CD8-positive, alpha-beta T cell (primary cell): ENCODE measurements at regions of chrX and their contacts with region 1.

Region 1: DNA sequence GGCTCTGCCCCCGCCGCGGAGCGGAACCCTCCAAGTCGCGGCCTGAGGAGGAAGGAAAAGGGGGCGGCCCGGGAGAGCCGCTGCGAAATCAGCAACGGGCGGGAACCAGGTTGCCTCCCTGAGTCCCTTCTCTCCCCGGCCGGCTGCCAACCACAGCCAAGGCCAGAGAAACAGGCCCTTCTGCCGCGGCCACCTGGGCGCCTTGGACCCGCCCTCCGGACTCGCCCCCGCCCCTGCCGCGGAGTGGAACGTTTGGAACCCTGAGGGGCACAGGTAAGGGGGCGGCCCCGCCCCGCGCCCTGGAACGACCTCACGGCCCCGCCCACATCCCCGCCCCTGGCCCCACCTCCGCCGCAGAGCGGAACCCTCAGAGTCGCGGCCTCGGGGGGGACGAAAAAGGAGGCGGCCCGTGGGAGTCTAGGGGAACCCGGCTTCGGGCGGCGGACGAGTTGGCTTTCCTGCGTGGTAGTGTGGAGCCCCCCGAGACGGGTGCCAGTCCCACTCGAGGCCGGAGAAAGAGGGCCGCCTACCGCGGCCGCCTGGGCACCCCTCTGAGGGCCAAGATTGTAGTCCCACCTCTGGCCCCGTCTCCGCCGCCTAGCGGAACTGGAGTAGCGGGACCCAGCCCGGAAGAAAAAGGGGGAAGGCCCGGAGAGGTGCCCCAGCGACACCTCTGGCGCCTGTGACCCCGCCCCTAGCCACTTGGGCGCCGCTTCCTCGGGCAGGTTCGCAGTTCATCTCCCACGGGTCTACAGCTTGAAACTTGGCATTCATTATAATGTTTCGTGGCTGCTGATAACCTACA is 669 bp upstream of the PHKA2 start:
- DNase-seq: peak; percentile 78 to 90 (median 82)
- ATAC-seq: peak; percentile 88
- H3K4me3 ChIP-seq: peak overlapping the region; percentile 75 to 79
- H3K4me3 Mint-ChIP-seq: peak overlapping the region; percentile 83
- H3K27ac ChIP-seq: peak overlapping the region; percentile 82 to 95
- H3K27ac Mint-ChIP-seq: peak overlapping the region; percentile 94
- H3K4me1 ChIP-seq: peaks cover 15% of the 10 kb centered on the region
- H3K4me1 Mint-ChIP-seq: peaks cover 27% of the 10 kb centered on the region
- H3K27me3 ChIP-seq: no peaks in the 10 kb centered on the region
- H3K27me3 Mint-ChIP-seq: no peaks in the 10 kb centered on the region
- CTCF ChIP-seq: peak; percentile 27

Region 2: DNA sequence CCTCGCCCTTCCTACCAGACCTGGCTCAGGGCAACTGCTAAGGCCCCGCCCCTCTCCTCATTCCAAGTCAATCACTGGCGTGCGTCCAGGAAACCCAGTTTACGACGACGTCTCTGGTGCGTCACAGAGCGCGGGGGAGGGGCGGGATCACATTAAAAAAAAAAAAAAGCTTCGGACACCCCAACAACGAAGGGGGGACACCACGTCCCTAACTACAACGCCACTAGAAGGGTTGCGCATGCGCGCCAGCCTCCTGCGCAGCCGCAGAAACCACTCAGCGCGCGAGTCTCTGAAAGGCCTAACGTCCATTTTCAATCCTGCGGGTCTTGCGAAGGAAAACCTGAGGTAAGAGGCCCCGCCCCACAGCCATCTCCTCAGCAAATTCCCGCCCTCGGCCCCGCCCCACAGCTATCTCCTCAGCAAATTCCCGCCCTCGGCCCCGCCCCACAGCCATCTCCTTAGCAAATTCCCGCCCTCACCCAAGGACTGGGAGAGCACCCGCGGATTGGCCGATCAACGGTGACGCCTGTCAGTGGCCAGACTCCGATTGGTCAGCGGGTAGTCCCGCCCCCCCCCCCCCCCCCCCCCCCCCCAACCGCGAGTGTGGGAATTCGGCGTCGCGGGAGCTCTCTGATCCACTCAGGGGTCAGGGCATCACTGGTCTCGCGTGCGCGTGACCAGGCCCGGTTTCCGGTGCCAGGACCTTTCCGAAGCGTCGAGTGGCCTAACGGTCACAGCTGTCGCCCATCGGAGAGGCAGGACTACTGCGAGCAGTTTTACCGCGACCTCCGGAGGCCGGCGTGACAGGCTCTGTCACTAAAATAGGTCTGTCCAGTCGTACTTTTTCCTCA is 1247.5 kb before region 1 on chrX and contains the start of gene SCML1:
- CTCF ChIA-PET with region 1: no interaction called
- POLR2A ChIA-PET with region 1: no interaction called
- intact Hi-C with region 1: loop called (anchors 5 kb)
- DNase-seq: peak; percentile 64 to 90 (median 86)
- ATAC-seq: peak; percentile 62
- H3K4me3 ChIP-seq: peak within 1 kb of the TSS; percentile 51 to 92
- H3K4me3 Mint-ChIP-seq: peak within 1 kb of the TSS; percentile 87
- H3K27ac ChIP-seq: peak within 1 kb of the TSS; percentile 88 to 95
- H3K27ac Mint-ChIP-seq: peak within 1 kb of the TSS; percentile 91
- H3K4me1 ChIP-seq: peaks cover 9% of the 10 kb centered on the region
- H3K4me1 Mint-ChIP-seq: peaks cover 35% of the 10 kb centered on the region
- H3K27me3 ChIP-seq: no peaks in the 10 kb centered on the region
- H3K27me3 Mint-ChIP-seq: no peaks in the 10 kb centered on the region
- CTCF ChIP-seq: no peak
- total RNA-seq, gene SCML1: 50.6 to 52.2 TPM

Region 3: DNA sequence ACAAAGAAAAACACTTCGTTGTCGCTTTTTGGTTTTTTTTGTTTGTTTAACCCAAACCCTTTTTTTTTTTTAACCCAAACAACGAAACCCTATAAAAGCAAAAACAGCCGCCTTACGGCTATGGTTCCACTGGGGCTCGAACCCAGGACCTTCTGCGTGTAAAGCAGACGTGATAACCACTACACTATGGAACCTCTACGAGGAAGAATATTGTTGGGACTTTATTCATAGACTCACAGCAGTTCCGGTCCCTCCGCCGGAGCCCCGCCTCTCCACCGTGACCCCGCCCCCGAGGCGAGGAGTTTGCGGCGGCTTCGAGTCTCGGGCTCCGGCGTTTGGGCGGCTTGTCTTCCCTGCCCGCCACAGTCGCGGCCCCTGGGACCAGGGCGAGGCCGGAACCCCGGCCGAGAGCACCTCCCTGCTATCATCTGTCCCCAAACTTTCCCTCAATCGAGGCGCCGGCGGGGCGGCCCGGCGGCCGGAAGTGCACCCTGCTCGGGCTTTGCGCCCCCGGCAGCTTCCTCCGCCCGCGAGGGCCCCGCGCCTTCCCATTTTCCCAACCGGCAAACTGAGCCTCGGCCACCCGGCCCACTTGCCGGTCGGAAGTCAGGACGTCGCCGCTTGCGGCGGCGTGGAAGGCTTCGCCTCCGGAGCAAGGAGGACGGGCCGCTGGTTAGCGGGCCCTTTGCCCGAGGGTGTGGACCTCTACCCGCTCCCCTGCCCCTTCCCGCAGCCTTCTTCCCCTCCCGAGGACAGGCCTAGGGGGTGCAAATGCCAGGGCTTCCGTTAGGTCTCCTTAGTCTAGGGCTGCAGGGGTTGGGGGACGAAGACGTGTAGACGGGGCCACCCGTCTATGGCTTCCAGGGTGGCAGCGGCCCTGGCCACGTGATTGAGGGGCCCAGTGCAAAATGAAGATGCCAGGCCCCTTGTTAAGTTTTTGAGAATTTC is 309.5 kb before region 1 on chrX:
- CTCF ChIA-PET with region 1: no interaction called
- POLR2A ChIA-PET with region 1: no interaction called
- intact Hi-C with region 1: loop called in 1 of 2 experiments (anchors 2 kb)
- DNase-seq: peak; percentile 66 to 88 (median 73)
- ATAC-seq: peak; percentile 90
- H3K4me3 ChIP-seq: peak overlapping the region; percentile 70 to 76
- H3K4me3 Mint-ChIP-seq: peak overlapping the region; percentile 81
- H3K27ac ChIP-seq: peak overlapping the region; percentile 76 to 84
- H3K27ac Mint-ChIP-seq: peak overlapping the region; percentile 89
- H3K4me1 ChIP-seq: no peaks in the 10 kb centered on the region
- H3K4me1 Mint-ChIP-seq: peaks cover 11% of the 10 kb centered on the region
- H3K27me3 ChIP-seq: no peaks in the 10 kb centered on the region
- H3K27me3 Mint-ChIP-seq: no peaks in the 10 kb centered on the region
- CTCF ChIP-seq: no peak

Region 4: DNA sequence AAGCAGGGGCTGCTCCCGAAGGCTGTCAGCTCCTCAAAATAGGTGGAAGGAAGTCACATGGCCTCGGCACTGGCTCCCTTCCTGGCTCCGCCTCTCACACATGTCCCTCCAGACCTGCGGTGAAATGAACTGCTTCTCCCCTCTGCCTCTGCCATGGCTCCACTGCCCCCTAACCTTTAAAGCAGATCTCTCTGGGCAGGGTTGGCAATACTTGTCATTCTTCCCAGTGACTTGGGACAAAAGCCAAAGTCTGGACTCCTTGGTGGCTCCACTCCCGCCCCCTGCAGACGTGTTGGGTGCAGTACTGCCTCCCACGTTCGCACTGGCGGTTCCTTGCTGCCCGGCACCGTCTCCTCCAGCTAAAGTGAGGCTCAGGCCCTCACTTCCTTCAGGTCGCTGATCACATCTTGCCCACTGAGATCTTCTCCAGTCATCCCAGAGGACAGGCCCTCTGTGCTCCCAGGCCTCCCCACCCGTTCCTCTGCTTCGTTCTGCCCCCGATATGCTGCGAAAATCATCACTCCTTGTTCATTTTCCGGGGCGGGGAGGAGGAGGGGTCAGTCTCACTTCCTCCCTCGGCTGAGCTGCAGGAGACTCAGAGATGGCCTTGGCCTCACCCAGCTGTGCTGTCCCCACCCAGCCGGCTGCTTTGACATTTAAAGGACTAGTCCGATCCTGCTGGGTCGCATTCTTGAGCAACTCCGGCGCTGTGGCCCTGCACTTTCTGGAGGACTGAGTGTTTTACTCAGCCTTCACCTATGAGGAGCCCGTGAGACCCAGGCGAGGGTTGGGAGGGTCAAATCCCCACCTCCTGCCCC is 98.0 kb before region 1 on chrX:
- CTCF ChIA-PET with region 1: no interaction called
- POLR2A ChIA-PET with region 1: no interaction called
- intact Hi-C with region 1: loop called (anchors 5 kb)
- DNase-seq: peak; percentile 2 to 67 (median 31)
- ATAC-seq: peak; percentile 47
- H3K4me3 ChIP-seq: peak overlapping the region; percentile 58 to 64
- H3K4me3 Mint-ChIP-seq: peak overlapping the region; percentile 88
- H3K27ac ChIP-seq: peak overlapping the region; percentile 14 to 69
- H3K27ac Mint-ChIP-seq: peak overlapping the region; percentile 91
- H3K4me1 ChIP-seq: peaks cover 27% of the 10 kb centered on the region
- H3K4me1 Mint-ChIP-seq: peaks cover 33% of the 10 kb centered on the region
- H3K27me3 ChIP-seq: no peaks in the 10 kb centered on the region
- H3K27me3 Mint-ChIP-seq: no peaks in the 10 kb centered on the region
- CTCF ChIP-seq: peak; percentile 33

Region 5: DNA sequence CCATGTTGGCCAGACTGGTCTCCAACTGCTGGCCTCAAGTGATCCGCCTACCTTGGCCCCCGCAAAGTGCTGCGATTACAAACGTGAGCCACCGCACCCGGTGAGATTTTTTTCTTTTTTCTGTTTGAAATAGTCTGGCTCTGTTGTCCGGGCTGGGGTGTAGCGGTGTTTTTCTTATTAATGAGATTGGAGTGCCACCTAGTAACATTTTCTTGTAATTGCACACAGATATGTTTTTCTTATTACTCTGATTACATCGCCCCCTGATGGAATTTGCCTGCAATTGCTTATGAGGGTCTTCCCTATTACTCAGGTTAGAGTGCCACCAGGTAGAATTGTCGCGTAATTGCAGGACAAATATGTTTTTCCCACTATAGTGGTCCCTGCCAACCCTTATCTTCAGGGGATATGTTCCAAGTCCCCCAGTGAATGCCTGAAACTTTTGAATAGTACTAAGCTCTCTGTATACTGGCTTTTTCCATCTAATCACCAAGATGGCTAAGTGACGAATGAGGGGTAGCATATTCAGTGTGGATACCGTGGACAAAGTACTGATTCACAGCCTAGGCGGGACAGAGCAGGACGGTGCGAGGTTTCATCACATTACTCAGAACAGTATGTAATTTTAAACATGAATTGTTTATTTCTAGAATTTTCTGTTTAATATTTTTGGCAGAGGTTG is 350.5 kb after region 1 on chrX:
- CTCF ChIA-PET with region 1: no interaction called
- POLR2A ChIA-PET with region 1: no interaction called
- intact Hi-C with region 1: loop called (anchors 2 to 5 kb)
- DNase-seq: peak in 3 of 9 experiments; percentile 21 to 53 (median 39)
- ATAC-seq: peak; percentile 21
- H3K4me3 ChIP-seq: no peak overlapping the region
- H3K4me3 Mint-ChIP-seq: no peak overlapping the region
- H3K27ac ChIP-seq: no peak overlapping the region
- H3K27ac Mint-ChIP-seq: no peak overlapping the region
- H3K4me1 ChIP-seq: no peaks in the 10 kb centered on the region
- H3K4me1 Mint-ChIP-seq: no peaks in the 10 kb centered on the region
- H3K27me3 ChIP-seq: no peaks in the 10 kb centered on the region
- H3K27me3 Mint-ChIP-seq: no peaks in the 10 kb centered on the region
- CTCF ChIP-seq: no peak

Region 6: GRCh38 chrX:19343535-19344408 is 359.2 kb after region 1 on chrX and contains the start of gene PDHA1:
- CTCF ChIA-PET with region 1: no interaction called
- POLR2A ChIA-PET with region 1: no interaction called
- intact Hi-C with region 1: loop called (anchors 1 to 5 kb)
- DNase-seq: peak; percentile 83 to 96 (median 92)
- ATAC-seq: peak; percentile 97
- H3K4me3 ChIP-seq: peak within 1 kb of the TSS; percentile 62 to 71
- H3K4me3 Mint-ChIP-seq: peak within 1 kb of the TSS; percentile 86
- H3K27ac ChIP-seq: peak within 1 kb of the TSS; percentile 77 to 82
- H3K27ac Mint-ChIP-seq: peak within 1 kb of the TSS; percentile 92
- H3K4me1 ChIP-seq: peaks cover 15% of the 10 kb centered on the region
- H3K4me1 Mint-ChIP-seq: peaks cover 23% of the 10 kb centered on the region
- H3K27me3 ChIP-seq: no peaks in the 10 kb centered on the region
- H3K27me3 Mint-ChIP-seq: no peaks in the 10 kb centered on the region
- CTCF ChIP-seq: no peak
- total RNA-seq, gene PDHA1: 107 to 115 TPM

Region 7: GRCh38 chrX:20141281-20142220 is 1157.0 kb after region 1 on chrX and contains the start of gene EIF1AX:
- CTCF ChIA-PET with region 1: no interaction called
- POLR2A ChIA-PET with region 1: no interaction called
- intact Hi-C with region 1: loop called in 1 of 2 experiments (anchors 10 kb)
- DNase-seq: peak; percentile 88 to 99 (median 96)
- ATAC-seq: peak; percentile 98
- H3K4me3 ChIP-seq: peak within 1 kb of the TSS; percentile 73 to 91
- H3K4me3 Mint-ChIP-seq: peak within 1 kb of the TSS; percentile 85
- H3K27ac ChIP-seq: peak within 1 kb of the TSS; percentile 79 to 84
- H3K27ac Mint-ChIP-seq: peak within 1 kb of the TSS; percentile 89
- H3K4me1 ChIP-seq: peaks cover 15% of the 10 kb centered on the region
- H3K4me1 Mint-ChIP-seq: peaks cover 26% of the 10 kb centered on the region
- H3K27me3 ChIP-seq: no peaks in the 10 kb centered on the region
- H3K27me3 Mint-ChIP-seq: no peaks in the 10 kb centered on the region
- CTCF ChIP-seq: no peak
- total RNA-seq, gene EIF1AX: 71.7 to 73.3 TPM